Naive thymus-derived CD4-positive, alpha-beta T cell (primary cell): ENCODE measurements at regions of chr18 and their contacts with region 1.

Region 1: DNA sequence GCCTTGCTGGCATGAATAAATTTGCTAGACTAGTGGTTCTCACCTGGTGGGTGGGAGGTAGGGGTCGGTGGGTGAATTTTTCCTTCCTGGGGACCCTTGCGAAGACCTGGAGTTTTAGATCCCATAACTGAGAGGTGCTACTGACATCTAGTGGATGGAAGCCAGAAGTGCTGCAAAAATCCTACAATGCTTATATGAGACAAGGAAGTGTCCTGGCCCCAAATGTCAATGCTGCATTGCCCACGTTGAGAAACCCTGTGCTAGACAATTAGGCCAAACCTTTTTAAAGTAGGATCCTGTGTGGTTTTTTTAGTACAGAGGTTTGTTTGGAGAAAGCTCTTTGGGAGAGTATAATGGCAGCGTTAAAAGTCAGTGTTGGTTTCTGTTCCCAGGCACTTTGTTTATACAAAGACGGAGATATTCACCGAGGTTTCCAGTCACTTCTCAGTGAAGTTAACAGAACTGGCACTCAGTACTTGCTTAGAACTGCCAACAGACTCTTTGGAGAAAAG is 9.6 kb downstream of the SERPINB8 start:
- DNase-seq: peak in 6 of 9 donors; percentile 20 to 52 (median 34)
- ATAC-seq: peak; percentile 78
- H3K4me3 ChIP-seq: no peak overlapping the region
- H3K4me3 Mint-ChIP-seq: peak overlapping the region in 1 of 10 donors; percentile 18
- H3K27ac ChIP-seq: no peak overlapping the region
- H3K27ac Mint-ChIP-seq: peak overlapping the region in 2 of 9 donors; percentile 58 to 79
- H3K4me1 ChIP-seq: peaks cover 0 to 8% of the 10 kb centered on the region in 2 donors
- H3K4me1 Mint-ChIP-seq: peaks cover 6 to 22% (median 10%) of the 10 kb centered on the region in 7 donors
- H3K27me3 ChIP-seq: no peaks in the 10 kb centered on the region
- H3K27me3 Mint-ChIP-seq: peaks cover 0 to 3% (median 0%) of the 10 kb centered on the region in 5 donors

Region 2: GRCh38 chr18:63823518-63824219 is 155.8 kb before region 1 on chr18:
- CTCF ChIA-PET with region 1: no interaction called
- POLR2A ChIA-PET with region 1: no interaction called
- intact Hi-C with region 1: loop called in 1 of 2 experiments (anchors 1 kb)
- DNase-seq: no peak
- ATAC-seq: no peak
- H3K4me3 ChIP-seq: no peak overlapping the region
- H3K4me3 Mint-ChIP-seq: no peak overlapping the region
- H3K27ac ChIP-seq: no peak overlapping the region
- H3K27ac Mint-ChIP-seq: no peak overlapping the region
- H3K4me1 ChIP-seq: no peaks in the 10 kb centered on the region
- H3K4me1 Mint-ChIP-seq: no peaks in the 10 kb centered on the region
- H3K27me3 ChIP-seq: no peaks in the 10 kb centered on the region
- H3K27me3 Mint-ChIP-seq: peaks cover 4 to 27% (median 17%) of the 10 kb centered on the region in 5 donors

Region 3: GRCh38 chr18:63890950-63891304 is 88.5 kb before region 1 on chr18:
- CTCF ChIA-PET with region 1: no interaction called
- POLR2A ChIA-PET with region 1: no interaction called
- intact Hi-C with region 1: loop called in 1 of 2 experiments (anchors 1 kb)
- DNase-seq: no peak
- ATAC-seq: no peak
- H3K4me3 ChIP-seq: no peak overlapping the region
- H3K4me3 Mint-ChIP-seq: no peak overlapping the region
- H3K27ac ChIP-seq: no peak overlapping the region
- H3K27ac Mint-ChIP-seq: no peak overlapping the region
- H3K4me1 ChIP-seq: no peaks in the 10 kb centered on the region
- H3K4me1 Mint-ChIP-seq: peaks cover 0 to 3% (median 0%) of the 10 kb centered on the region in 7 donors
- H3K27me3 ChIP-seq: peaks cover 0 to 4% of the 10 kb centered on the region in 2 donors
- H3K27me3 Mint-ChIP-seq: peaks cover 4 to 35% (median 21%) of the 10 kb centered on the region in 5 donors

Region 4: GRCh38 chr18:63936156-63936931 is 43.1 kb before region 1 on chr18:
- CTCF ChIA-PET with region 1: no interaction called
- POLR2A ChIA-PET with region 1: no interaction called
- intact Hi-C with region 1: loop called in 1 of 2 experiments (anchors 2 kb)
- DNase-seq: peak in 8 of 9 donors; percentile 6 to 69 (median 19)
- ATAC-seq: peak; percentile 93
- H3K4me3 ChIP-seq: peak overlapping the region; percentile 58
- H3K4me3 Mint-ChIP-seq: peak overlapping the region in 8 of 10 donors; percentile 39 to 86 (median 64)
- H3K27ac ChIP-seq: no peak overlapping the region
- H3K27ac Mint-ChIP-seq: peak overlapping the region in 1 of 9 donors; percentile 54
- H3K4me1 ChIP-seq: peaks cover 0 to 5% of the 10 kb centered on the region in 2 donors
- H3K4me1 Mint-ChIP-seq: peaks cover 0 to 4% (median 3%) of the 10 kb centered on the region in 7 donors
- H3K27me3 ChIP-seq: peaks cover 0 to 8% of the 10 kb centered on the region in 2 donors
- H3K27me3 Mint-ChIP-seq: peaks cover 7 to 38% (median 24%) of the 10 kb centered on the region in 5 donors

Region 5: DNA sequence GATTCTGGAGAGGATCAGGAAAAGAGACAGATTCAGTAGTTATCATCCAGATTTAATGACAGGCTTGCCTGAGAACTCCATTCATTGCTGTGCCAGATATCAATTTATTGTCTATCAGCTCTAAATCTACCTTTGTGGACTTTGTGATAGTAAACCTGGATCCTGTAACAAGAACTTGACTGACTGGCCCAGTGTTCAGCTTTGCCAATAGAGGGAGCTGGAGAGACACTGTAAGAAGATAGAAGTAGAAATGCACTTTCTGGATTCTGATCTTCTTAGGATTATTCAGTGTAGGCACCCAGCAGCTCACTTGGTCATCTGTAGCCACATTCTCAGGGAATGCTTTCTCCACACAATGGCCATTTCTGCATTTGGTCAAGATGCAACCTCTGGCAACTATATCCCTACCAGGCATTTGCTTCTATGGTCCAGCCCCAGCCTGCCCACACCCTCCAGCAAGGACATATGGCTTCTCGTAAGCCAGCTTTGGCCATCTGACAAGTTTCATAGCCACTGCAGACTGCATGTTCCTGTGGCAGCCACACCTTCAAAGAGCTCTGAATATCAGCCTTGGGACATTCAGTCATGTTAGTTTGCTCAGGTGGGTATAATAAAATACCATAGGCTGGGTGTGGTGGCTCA is 15.7 kb before region 1 on chr18:
- CTCF ChIA-PET with region 1: interaction called, 21 read pairs
- POLR2A ChIA-PET with region 1: no interaction called
- intact Hi-C with region 1: loop called (anchors 1 kb)
- DNase-seq: peak in 7 of 9 donors; percentile 36 to 65 (median 54)
- ATAC-seq: peak; percentile 72
- H3K4me3 ChIP-seq: no peak overlapping the region
- H3K4me3 Mint-ChIP-seq: no peak overlapping the region
- H3K27ac ChIP-seq: no peak overlapping the region
- H3K27ac Mint-ChIP-seq: no peak overlapping the region
- H3K4me1 ChIP-seq: no peaks in the 10 kb centered on the region
- H3K4me1 Mint-ChIP-seq: peaks cover 0 to 8% (median 2%) of the 10 kb centered on the region in 7 donors
- H3K27me3 ChIP-seq: no peaks in the 10 kb centered on the region
- H3K27me3 Mint-ChIP-seq: peaks cover 0 to 36% (median 18%) of the 10 kb centered on the region in 5 donors

Region 6: DNA sequence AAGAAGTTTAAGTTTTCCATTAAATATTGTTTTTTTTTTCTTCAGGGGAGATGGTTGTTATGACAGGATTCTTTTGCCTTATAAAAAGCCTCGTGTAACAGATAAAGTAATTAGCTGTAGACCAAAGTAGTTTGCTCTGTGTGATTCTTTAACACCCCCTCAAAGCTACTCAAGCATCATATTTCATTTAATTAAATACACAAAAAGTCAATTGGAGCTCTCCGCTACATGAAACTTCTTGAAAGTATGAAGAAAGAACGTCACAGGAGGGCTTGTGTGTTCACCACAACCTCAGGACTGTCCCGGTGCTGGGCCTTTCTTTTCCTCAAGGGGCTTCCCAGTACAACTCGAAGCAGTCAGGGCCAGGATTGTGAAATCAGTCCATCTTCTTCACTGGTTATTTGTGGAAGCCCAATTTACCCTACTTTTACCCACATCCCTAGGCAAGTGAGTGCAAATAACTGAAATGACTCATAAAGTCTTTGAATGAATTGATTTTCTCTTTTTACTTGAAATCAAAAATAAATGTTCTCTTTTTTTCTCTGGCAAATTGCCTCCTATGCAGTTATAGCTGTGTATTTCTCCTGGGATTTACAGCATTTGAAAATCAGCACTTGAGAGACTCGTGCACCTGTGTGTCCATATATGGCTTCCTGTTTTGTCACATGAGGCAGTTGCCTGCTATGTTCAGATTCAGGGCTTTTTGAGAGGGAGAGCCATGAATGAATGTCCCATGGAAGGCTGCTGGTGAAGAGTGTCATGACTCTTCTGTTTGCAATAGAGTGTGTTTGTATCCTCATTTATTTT is 120.9 kb after region 1 on chr18:
- CTCF ChIA-PET with region 1: no interaction called
- POLR2A ChIA-PET with region 1: no interaction called
- intact Hi-C with region 1: no loop called
- DNase-seq: no peak
- ATAC-seq: no peak
- H3K4me3 ChIP-seq: no peak overlapping the region
- H3K4me3 Mint-ChIP-seq: no peak overlapping the region
- H3K27ac ChIP-seq: no peak overlapping the region
- H3K27ac Mint-ChIP-seq: no peak overlapping the region
- H3K4me1 ChIP-seq: no peaks in the 10 kb centered on the region
- H3K4me1 Mint-ChIP-seq: no peaks in the 10 kb centered on the region
- H3K27me3 ChIP-seq: no peaks in the 10 kb centered on the region
- H3K27me3 Mint-ChIP-seq: peaks cover 0 to 7% (median 4%) of the 10 kb centered on the region in 5 donors